ENCODE measurements at regions of chr12 and their contacts with region 1.

Region 1: GRCh38 chr12:109385339-109386067 is 37.8 kb downstream of the MYO1H start:
- H3K4me3 ChIP-seq: no peak overlapping the region
- H3K27ac ChIP-seq: no peak overlapping the region
- H3K4me1 ChIP-seq: no peaks in the 10 kb centered on the region
- CTCF ChIP-seq: peak; percentile 65

Region 2: DNA sequence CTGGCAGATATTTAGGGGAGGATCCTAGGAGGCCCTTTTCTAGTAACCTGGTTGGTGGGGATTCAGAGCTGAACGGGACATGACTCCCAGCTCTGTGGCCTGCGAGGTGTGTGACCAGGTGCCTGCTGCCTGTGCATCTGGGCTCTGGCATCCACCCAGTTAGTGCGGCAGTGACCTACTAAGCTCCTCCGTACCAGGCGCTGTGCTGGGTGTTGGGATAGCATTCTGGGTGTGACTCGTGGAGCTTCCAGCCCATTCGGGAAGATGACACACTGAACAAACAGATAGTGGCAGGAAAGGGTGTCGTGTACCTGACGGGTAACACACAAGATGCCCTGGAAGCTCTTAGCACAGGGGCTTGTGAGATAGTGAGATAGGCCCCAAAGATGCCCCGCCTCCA is 188.2 kb before region 1 on chr12:
- CTCF ChIA-PET with region 1: no interaction called
- POLR2A ChIA-PET with region 1: no interaction called
- H3K4me3 ChIP-seq: no peak overlapping the region
- H3K27ac ChIP-seq: no peak overlapping the region
- H3K4me1 ChIP-seq: no peaks in the 10 kb centered on the region
- CTCF ChIP-seq: no peak

Region 3: DNA sequence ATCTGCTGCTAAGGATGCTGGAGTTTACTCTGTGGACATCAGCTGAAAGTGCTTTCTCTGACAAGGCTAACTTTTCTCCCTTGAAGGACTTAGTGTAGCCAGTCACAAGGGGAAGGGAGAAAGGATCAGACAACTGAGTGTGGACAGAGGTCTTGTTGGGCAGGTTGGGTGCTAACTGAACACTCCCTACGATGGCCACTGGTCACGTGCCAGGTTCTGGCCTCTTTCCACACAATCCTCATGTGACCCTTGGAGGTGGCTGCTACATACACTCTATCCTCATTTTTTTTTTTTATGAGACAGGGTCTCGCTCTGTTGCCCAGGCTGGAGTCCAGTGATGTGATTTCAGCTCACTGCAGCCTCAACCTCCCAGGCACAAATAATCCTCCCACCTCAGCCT is 116.1 kb before region 1 on chr12:
- CTCF ChIA-PET with region 1: interaction called, 93 read pairs
- POLR2A ChIA-PET with region 1: no interaction called
- H3K4me3 ChIP-seq: no peak overlapping the region
- H3K27ac ChIP-seq: no peak overlapping the region
- H3K4me1 ChIP-seq: no peaks in the 10 kb centered on the region
- CTCF ChIP-seq: no peak